Posterior cingulate gyrus (tissue), 11 donors: ENCODE measurements at regions of chr20 and their contacts with region 1.

Region 1: DNA sequence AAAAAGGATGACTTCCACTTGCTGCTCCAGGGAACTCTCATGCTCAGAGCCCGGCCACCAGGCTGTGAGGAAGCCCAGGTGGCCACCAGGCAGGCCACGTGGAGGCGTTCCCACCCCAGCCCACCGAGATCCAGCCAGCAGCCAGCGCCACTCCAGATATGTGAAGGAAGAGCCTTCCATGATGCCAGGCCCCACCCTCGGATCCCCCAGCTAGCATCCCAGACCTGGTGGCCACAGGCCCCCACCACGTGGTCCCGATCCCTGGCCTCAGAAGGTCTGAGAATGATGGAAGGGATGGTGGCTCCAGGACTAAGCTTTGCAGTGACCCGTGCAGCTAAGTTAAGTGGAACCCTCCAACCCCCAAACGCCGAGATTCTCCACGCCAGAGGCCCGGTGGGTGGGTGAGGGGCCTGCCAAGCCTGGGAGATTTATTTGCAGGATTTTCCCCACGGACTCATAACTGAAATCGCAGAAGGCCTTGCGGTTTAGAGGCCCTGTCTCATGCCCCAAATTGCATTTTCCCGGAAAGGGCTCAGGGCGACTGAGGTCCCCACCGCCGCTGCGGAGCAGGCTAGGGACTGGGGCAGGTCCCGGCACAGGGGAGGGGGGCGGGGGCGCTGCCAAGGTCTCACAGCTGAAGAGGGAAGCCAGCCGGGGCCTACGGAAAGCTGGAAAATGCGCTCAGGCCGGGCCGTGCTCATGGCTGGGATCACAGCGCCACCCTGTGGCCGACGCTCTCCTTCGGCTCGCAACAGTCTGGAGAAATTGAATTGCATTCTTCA is 31.1 kb upstream of the CST7 start:
- DNase-seq: peak; percentile 49 to 95 (median 78)

Region 2: GRCh38 chr20:23937303-23938117 is 980.5 kb before region 1 on chr20:
- intact Hi-C with region 1: loop called (anchors 1 kb)
- DNase-seq: peak; percentile 54 to 96 (median 78)

Region 3: GRCh38 chr20:24160563-24161375 is 757.2 kb before region 1 on chr20:
- intact Hi-C with region 1: loop called (anchors 2 kb)
- DNase-seq: peak; percentile 36 to 94 (median 66)

Region 4: GRCh38 chr20:24303381-24303780 is 614.6 kb before region 1 on chr20:
- intact Hi-C with region 1: loop called (anchors 5 kb)
- DNase-seq: peak in 4 of 10 donors; percentile 23 to 86 (median 54)